Endothelial cell of umbilical vein (primary cell): ENCODE measurements at regions of chr11 and their contacts with region 1.

Region 1: GRCh38 chr11:69888483-69889076 is 69.4 kb upstream of the FGF3 start:
- DNase-seq: peak; percentile 58
- H3K4me3 ChIP-seq: no peak overlapping the region
- H3K27ac ChIP-seq: no peak overlapping the region
- H3K4me1 ChIP-seq: no peaks in the 10 kb centered on the region
- H3K27me3 ChIP-seq: peaks cover 32 to 34% of the 10 kb centered on the region in 2 experiments
- CTCF ChIP-seq: peak; percentile 95 to 97
- POLR2A ChIP-seq: no peak

Region 2: GRCh38 chr11:69704508-69705253 is 183.9 kb before region 1 on chr11:
- CTCF ChIA-PET with region 1: interaction called, 9 read pairs
- POLR2A ChIA-PET with region 1: no interaction called
- dilution Hi-C with region 1: no loop called
- intact Hi-C with region 1: loop called (anchors 5 kb)
- DNase-seq: no peak
- H3K4me3 ChIP-seq: no peak overlapping the region
- H3K27ac ChIP-seq: no peak overlapping the region
- H3K4me1 ChIP-seq: peaks cover 8% of the 10 kb centered on the region
- H3K27me3 ChIP-seq: peaks cover 55 to 60% of the 10 kb centered on the region in 2 experiments
- CTCF ChIP-seq: peak; percentile 41 to 59
- POLR2A ChIP-seq: no peak

Region 3: DNA sequence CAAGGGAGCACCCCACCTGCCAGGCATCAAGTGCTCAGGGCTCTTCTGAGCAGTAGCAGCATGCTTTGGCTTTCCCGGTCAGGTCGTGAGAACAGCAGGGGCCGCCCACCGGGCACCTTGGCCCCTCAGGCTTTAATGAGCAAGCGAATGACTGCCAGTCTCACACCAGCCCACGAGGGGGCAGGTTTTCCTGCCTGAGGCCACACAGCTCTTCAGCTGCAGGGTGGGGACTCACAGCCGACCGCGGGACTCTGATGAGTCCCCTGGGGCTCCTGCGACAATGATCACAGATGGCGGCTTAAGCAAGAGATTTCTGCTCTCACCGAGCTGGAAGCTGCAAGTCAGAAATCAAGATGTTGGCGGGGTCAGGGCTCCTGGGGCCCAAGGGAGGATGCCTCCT is 170.4 kb before region 1 on chr11:
- CTCF ChIA-PET with region 1: interaction called, 16 read pairs
- POLR2A ChIA-PET with region 1: no interaction called
- dilution Hi-C with region 1: no loop called
- intact Hi-C with region 1: no loop called
- DNase-seq: peak; percentile 14
- H3K4me3 ChIP-seq: no peak overlapping the region
- H3K27ac ChIP-seq: no peak overlapping the region
- H3K4me1 ChIP-seq: no peaks in the 10 kb centered on the region
- H3K27me3 ChIP-seq: peaks cover 22 to 24% of the 10 kb centered on the region in 2 experiments
- CTCF ChIP-seq: peak; percentile 49 to 64
- POLR2A ChIP-seq: no peak

Region 4: DNA sequence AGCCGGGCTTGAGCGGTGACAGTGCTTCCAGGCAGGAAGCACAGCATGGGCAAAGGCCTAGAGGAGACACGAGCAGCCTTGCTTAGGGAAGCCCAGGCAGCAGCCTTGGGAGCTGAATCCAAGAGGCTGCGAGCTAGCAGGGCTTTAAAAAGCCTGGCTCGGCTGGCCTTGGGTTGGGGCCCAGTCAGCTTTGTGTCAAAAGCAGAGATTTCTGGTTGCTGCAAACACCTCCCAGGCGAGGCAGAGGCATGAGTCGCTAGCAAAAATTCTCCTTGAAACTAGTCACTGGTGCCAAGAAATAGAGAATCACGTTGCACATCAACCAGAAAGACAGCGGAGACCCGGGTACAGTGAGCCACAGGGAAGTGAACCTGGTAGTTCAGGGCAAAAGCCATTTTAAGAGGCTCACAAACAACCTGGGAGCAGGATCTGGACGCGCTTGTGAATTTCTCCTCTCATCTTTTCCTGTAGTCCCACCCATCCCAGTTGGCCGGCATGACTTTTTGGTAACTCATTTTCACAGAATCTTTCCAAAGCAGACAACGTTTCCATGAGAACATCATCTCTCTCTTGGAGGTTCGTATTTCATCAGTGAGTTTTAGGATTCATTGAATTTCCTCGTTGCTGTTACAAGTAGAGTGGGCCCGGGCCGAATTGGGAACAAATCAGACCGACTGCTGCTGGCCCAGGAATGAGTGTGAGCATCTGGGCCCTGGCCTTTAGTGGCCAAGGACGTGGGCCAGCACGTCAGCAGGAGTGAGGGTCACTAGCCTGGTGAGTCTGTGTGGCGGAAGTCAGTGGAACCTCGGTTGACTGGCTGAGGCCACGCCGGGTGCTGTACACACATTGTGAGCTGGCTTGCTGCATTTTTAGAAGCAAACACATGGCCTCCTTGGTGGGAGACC is 97.1 kb before region 1 on chr11:
- CTCF ChIA-PET with region 1: no interaction called
- POLR2A ChIA-PET with region 1: no interaction called
- dilution Hi-C with region 1: no loop called
- intact Hi-C with region 1: no loop called
- DNase-seq: no peak
- H3K4me3 ChIP-seq: no peak overlapping the region
- H3K27ac ChIP-seq: no peak overlapping the region
- H3K4me1 ChIP-seq: no peaks in the 10 kb centered on the region
- H3K27me3 ChIP-seq: no peaks in the 10 kb centered on the region
- CTCF ChIP-seq: no peak
- POLR2A ChIP-seq: no peak

Region 5: DNA sequence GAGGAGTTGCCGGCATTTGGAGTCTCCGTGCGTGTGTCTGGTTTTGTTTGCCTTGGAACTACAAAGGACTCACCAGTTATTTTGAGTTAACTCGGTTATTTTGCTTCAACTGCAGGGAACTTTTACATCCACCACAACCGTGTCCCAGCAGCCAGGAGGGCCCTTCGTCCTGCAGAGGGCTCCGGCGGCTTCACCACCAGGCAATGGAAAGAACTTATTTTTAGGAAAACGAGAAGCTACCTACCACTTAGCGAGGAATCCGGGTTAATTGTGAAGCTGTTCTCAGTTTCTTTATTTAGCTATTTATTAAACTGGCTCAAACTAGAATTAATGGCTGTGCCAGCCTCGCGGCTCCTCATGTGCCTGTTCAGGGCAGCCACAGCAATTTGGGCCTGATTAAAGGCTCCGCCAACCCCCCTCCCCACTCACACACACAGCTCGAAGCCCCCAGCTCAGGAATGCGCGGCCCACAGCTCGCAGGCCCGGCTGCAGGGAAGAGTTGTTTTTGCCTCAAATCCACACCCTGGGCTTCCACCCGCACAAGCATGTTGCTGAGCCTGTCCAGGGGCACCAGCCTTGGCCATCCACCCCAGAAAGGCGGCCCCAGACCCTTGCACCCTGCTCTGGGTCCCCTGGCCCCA is 13.5 kb before region 1 on chr11:
- CTCF ChIA-PET with region 1: interaction called, 13 read pairs
- POLR2A ChIA-PET with region 1: no interaction called
- dilution Hi-C with region 1: no loop called
- intact Hi-C with region 1: no loop called
- DNase-seq: no peak
- H3K4me3 ChIP-seq: no peak overlapping the region
- H3K27ac ChIP-seq: no peak overlapping the region
- H3K4me1 ChIP-seq: no peaks in the 10 kb centered on the region
- H3K27me3 ChIP-seq: peaks cover 0 to 2% of the 10 kb centered on the region in 2 experiments
- CTCF ChIP-seq: no peak
- POLR2A ChIP-seq: no peak

Region 6: GRCh38 chr11:69899957-69900821 is 11.6 kb after region 1 on chr11:
- CTCF ChIA-PET with region 1: interaction called, 14 read pairs
- POLR2A ChIA-PET with region 1: no interaction called
- dilution Hi-C with region 1: no loop called
- intact Hi-C with region 1: no loop called
- DNase-seq: peak; percentile 67
- H3K4me3 ChIP-seq: no peak overlapping the region
- H3K27ac ChIP-seq: no peak overlapping the region
- H3K4me1 ChIP-seq: peaks cover 13% of the 10 kb centered on the region
- H3K27me3 ChIP-seq: peaks cover 0 to 7% of the 10 kb centered on the region in 2 experiments
- CTCF ChIP-seq: no peak
- POLR2A ChIP-seq: no peak